Heart left ventricle (tissue), 16 donors: ENCODE measurements at regions of chr17 and their contacts with region 1.

Region 1: GRCh38 chr17:37206299-37206698 is 169.5 kb upstream of the C17orf78 start:
- DNase-seq: no peak
- ATAC-seq: no peak
- H3K4me3 ChIP-seq: no peak overlapping the region
- H3K27ac ChIP-seq: no peak overlapping the region
- H3K4me1 ChIP-seq: no peaks in the 10 kb centered on the region
- H3K27me3 ChIP-seq: no peaks in the 10 kb centered on the region
- CTCF ChIP-seq: no peak
- POLR2A ChIP-seq: no peak

Region 2: DNA sequence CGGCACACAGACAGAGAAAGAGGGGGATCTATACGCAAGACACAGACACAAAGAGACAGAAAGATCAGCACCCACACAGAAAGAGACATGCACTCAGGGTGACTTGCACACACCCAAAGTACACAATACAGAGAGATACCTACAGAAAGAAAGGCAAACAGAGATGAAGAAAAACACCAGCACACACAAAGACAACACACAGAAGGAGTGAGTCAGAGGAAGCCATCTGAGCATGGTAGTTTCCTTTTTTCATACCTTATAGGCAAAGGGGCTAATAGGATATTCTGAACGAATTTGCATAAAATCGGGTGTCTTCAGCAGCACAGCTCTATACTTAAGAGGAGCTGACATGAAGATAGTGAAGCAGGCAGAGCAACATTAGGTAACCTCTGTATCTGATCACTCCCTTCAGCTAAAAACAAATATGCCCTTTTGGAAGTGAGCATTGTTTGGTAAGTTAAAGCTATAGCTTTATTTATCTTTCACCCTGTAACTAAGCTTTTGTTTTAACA is 58.9 kb before region 1 on chr17:
- intact Hi-C with region 1: loop called in 1 of 10 experiments (anchors 10 kb)
- DNase-seq: no peak
- ATAC-seq: no peak
- H3K4me3 ChIP-seq: no peak overlapping the region
- H3K27ac ChIP-seq: no peak overlapping the region
- H3K4me1 ChIP-seq: peaks cover 0 to 5% (median 0%) of the 10 kb centered on the region in 12 donors
- H3K27me3 ChIP-seq: no peaks in the 10 kb centered on the region
- CTCF ChIP-seq: no peak
- POLR2A ChIP-seq: no peak